ENCODE measurements at regions of chr3 and their contacts with region 1.

Region 1: DNA sequence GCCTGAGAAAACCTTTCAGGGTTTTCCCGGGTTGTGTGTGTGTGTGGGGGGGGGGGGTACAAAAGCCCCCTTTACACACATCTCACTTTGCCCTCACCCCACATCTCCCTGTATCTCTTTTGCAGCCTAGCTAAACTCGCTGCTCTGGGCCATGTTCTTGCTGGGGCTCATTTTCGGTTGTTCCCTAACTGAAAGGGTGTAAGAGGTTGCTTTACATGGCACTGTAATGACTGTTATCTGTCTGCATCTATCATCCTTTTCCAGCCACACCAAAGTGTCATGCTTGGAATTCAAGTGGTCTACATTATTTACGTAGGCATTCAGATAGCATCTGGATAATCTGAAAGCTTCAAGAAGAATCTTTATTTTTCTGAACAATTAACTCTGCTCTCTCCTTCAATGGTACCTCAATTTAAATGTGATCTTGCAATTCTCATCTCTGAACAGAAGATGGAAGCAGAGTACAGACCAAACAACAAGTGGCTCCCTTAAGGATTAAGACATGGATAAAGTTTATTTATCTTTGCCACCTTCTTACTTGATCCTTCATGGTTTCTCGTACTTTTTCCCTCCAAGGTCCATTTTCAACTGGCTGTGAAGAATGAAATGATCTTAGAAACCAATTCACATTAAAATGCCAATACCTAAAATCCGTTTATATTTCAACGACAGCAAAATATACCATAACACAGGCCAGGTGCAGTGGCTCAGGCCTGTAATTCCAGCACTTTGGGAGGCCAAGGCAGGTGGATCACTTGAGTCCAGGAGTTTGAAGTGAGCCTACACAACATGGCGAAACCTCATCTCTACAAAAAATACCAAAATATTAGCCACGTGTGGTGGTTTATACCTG is 34.9 kb downstream of the DCLK3 start:
- DNase-seq: no peak
- H3K4me3 ChIP-seq: no peak overlapping the region
- H3K27ac ChIP-seq: no peak overlapping the region
- H3K4me1 ChIP-seq: peaks cover 0 to 5% (median 0%) of the 10 kb centered on the region in 4 donors
- H3K27me3 ChIP-seq: peaks cover 0 to 11% (median 0%) of the 10 kb centered on the region in 4 donors
- CTCF ChIP-seq: peak; percentile 66 to 70 (median 68)
- EP300 ChIP-seq: no peak
- POLR2A ChIP-seq: no peak

Region 2: GRCh38 chr3:36868614-36869436 is 139.4 kb after region 1 on chr3:
- intact Hi-C with region 1: loop called (anchors 2 kb)
- DNase-seq: no peak
- H3K4me3 ChIP-seq: no peak overlapping the region
- H3K27ac ChIP-seq: no peak overlapping the region
- H3K4me1 ChIP-seq: peaks cover 0 to 5% (median 0%) of the 10 kb centered on the region in 4 donors
- H3K27me3 ChIP-seq: no peaks in the 10 kb centered on the region
- CTCF ChIP-seq: peak; percentile 69 to 88 (median 80)
- EP300 ChIP-seq: no peak
- POLR2A ChIP-seq: no peak

Region 3: DNA sequence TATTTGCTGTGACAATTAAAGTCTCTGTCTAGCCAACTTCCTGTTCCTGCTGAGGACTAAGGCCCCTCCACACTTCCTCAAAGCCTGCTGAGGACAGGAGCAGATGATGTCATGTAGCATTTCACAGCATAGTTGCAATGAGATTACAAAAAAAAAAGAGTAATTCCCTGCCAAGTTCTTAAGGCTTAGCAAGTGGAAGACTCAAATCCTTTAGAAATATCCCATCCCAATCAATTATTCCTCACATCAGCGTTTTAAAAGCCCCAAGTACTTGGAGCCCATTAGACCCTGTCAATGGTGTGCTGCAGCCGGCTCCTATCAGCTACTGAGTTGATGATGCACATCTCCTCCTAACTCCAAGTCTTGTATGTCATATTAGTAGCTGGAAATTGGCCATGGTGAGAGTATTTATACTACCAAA is 163.7 kb after region 1 on chr3:
- intact Hi-C with region 1: no loop called
- DNase-seq: peak; percentile 79
- H3K4me3 ChIP-seq: no peak overlapping the region
- H3K27ac ChIP-seq: no peak overlapping the region
- H3K4me1 ChIP-seq: peaks cover 0 to 13% (median 6%) of the 10 kb centered on the region in 4 donors
- H3K27me3 ChIP-seq: no peaks in the 10 kb centered on the region
- CTCF ChIP-seq: no peak
- EP300 ChIP-seq: no peak
- POLR2A ChIP-seq: no peak

Region 4: GRCh38 chr3:36957862-36958686 is 228.6 kb after region 1 on chr3:
- intact Hi-C with region 1: loop called (anchors 5 kb)
- DNase-seq: no peak
- H3K4me3 ChIP-seq: no peak overlapping the region
- H3K27ac ChIP-seq: no peak overlapping the region
- H3K4me1 ChIP-seq: peaks cover 0 to 8% (median 6%) of the 10 kb centered on the region in 4 donors
- H3K27me3 ChIP-seq: no peaks in the 10 kb centered on the region
- CTCF ChIP-seq: no peak
- EP300 ChIP-seq: no peak
- POLR2A ChIP-seq: no peak

Measured in esophagus muscularis mucosa (tissue), 4 donors.